ENCODE measurements at regions of chr1 and their contacts with region 1.

Region 1: GRCh38 chr1:110196917-110197765 is 13.0 kb upstream of the KCNC4 start:
- DNase-seq: peak; percentile 32 to 66 (median 47)
- H3K4me3 ChIP-seq: no peak overlapping the region
- H3K4me3 Mint-ChIP-seq: no peak overlapping the region
- H3K27ac ChIP-seq: no peak overlapping the region
- H3K27ac Mint-ChIP-seq: no peak overlapping the region
- H3K4me1 ChIP-seq: no peaks in the 10 kb centered on the region
- H3K4me1 Mint-ChIP-seq: peaks cover 0 to 2% (median 0%) of the 10 kb centered on the region in 3 donors
- H3K27me3 ChIP-seq: no peaks in the 10 kb centered on the region
- H3K27me3 Mint-ChIP-seq: no peaks in the 10 kb centered on the region

Region 2: GRCh38 chr1:110312188-110313121 is 115.3 kb after region 1 on chr1:
- CTCF ChIA-PET with region 1: interaction called, 438 read pairs
- POLR2A ChIA-PET with region 1: no interaction called
- DNase-seq: peak; percentile 57 to 82 (median 62)
- H3K4me3 ChIP-seq: no peak overlapping the region
- H3K4me3 Mint-ChIP-seq: peak overlapping the region in 1 of 7 donors; percentile 54
- H3K27ac ChIP-seq: no peak overlapping the region
- H3K27ac Mint-ChIP-seq: no peak overlapping the region
- H3K4me1 ChIP-seq: no peaks in the 10 kb centered on the region
- H3K4me1 Mint-ChIP-seq: peaks cover 0 to 2% (median 0%) of the 10 kb centered on the region in 3 donors
- H3K27me3 ChIP-seq: no peaks in the 10 kb centered on the region
- H3K27me3 Mint-ChIP-seq: peaks cover 0 to 2% of the 10 kb centered on the region in 2 donors

Region 3: GRCh38 chr1:110495926-110496600 is 298.9 kb after region 1 on chr1:
- CTCF ChIA-PET with region 1: interaction called, 20 read pairs
- POLR2A ChIA-PET with region 1: interaction called, 3 read pairs
- DNase-seq: peak; percentile 48 to 80 (median 59)
- H3K4me3 ChIP-seq: no peak overlapping the region
- H3K4me3 Mint-ChIP-seq: no peak overlapping the region
- H3K27ac ChIP-seq: no peak overlapping the region
- H3K27ac Mint-ChIP-seq: no peak overlapping the region
- H3K4me1 ChIP-seq: no peaks in the 10 kb centered on the region
- H3K4me1 Mint-ChIP-seq: no peaks in the 10 kb centered on the region
- H3K27me3 ChIP-seq: no peaks in the 10 kb centered on the region
- H3K27me3 Mint-ChIP-seq: peaks cover 0 to 9% of the 10 kb centered on the region in 2 donors

Measured in CD8-positive, alpha-beta memory T cell (primary cell).